ENCODE measurements at regions of chr6 and their contacts with region 1.

Region 1: DNA sequence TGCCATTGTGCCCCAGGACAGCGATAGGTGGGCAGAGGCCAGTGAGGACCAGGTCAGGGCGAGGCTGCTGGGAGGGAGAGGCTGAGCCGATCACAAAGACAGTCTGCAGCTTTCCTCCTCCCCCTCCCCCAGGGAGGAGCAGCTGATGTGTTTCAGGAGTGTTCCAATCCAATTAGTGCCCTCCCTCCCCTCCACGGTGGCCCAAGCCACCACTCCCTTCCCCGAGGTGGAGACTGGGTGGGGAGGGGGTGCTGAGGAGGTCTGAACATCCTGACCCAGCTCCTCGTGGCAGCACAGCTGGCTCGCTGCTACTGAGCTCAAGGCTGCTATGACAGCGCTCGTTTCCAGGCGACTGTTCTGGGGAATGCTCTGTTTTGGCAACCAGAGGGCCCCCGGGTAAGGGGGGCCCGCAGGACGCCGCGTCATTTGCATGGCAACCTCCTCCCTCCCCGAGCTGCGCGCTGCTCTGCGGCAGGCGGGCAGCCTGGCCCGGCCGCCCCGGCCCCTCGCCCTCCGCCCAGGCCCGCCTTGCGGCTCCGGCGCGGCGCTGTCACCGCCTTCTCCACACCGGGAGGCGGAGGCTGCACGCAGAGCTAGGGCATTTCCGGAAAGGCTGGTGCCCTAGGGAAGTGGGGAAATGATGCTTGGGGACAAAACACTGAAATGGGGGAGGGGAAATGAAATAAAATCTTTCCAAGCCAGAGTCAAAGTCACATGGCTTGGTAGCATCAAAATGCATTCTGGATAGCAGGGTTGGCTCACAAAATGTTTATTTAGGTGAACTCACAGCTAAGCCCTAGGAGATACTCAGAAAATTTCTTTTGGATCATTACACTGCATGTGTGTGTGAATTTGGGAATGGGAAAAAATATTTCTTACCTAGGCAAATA is 67.4 kb upstream of the PIM1 start:
- DNase-seq: peak; percentile 70
- ATAC-seq: peak; percentile 80
- H3K4me3 Mint-ChIP-seq: peak overlapping the region; percentile 78
- H3K27ac Mint-ChIP-seq: peak overlapping the region; percentile 82
- H3K4me1 Mint-ChIP-seq: peaks cover 38% of the 10 kb centered on the region
- H3K27me3 Mint-ChIP-seq: no peaks in the 10 kb centered on the region
- CTCF ChIP-seq: no peak

Region 2: DNA sequence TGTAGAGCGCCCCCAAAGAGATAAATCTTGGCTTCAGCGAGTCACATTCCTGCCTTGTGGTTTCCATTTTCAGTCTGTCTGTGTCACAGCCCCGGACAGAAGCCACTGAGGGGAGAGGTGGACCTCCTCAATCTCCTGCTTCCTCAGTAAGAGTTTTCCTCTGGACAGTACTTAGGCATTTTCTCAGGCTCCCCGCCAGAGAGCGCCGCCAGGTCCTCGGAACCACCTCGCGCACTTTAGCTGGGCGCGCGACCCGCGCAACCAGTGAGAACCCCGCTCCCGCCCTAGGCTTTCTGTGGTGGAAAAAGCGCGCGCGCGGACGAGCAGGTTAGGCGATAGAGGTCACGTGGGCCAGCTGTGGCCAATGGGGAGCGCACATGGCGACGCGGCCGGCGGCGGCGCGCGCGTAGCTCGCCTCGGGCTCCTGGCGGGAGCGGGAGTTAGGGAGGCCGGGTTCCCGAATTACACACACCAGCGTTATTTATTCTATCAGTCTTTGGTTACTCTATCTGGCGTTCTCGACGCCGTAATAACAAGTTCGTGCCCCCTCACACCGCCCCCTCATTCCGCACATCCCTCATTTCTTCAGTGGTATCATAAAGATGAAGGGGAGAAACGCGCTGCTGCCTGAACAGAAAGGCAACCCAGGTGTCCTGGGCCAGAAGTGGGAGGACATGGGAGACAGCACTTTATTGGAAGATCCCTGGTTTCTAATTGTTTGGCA is 679.3 kb before region 1 on chr6:
- CTCF ChIA-PET with region 1: no interaction called
- POLR2A ChIA-PET with region 1: no interaction called
- intact Hi-C with region 1: loop called (anchors 10 kb)
- DNase-seq: peak; percentile 91
- ATAC-seq: peak; percentile 95
- H3K4me3 Mint-ChIP-seq: peak overlapping the region; percentile 94
- H3K27ac Mint-ChIP-seq: peak overlapping the region; percentile 89
- H3K4me1 Mint-ChIP-seq: peaks cover 16% of the 10 kb centered on the region
- H3K27me3 Mint-ChIP-seq: no peaks in the 10 kb centered on the region
- CTCF ChIP-seq: no peak

Region 3: DNA sequence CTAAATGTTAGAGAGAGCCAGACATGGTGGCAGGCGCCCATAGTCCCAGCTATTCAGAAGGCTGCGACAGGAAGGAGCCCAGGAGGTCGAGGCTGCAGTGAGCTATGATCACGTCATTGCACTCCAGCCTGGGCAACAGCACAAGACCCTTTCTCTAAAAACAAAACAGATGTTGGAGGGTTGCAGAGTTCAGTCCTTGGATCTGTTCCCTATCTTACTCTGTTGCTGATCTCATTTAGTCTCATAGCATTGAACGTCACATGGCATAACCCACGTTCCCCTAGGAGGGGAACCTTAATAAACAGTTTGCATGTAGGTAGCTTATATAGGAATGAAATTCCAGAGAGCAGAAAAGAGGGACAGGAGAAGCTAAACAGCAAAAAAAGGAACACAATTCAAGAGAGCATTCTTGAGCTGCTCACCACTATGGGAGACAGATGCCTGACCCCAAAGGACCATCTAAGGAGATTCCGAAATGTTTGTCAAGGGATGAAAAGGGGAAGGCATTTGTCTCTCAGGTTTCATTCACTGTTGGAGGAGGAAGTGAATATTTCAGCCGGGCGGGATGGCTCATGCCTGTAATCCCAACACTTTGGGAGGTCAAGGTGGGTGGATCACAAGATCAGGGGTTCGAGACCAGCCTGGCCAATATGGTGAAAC is 12.8 kb after region 1 on chr6:
- CTCF ChIA-PET with region 1: no interaction called
- POLR2A ChIA-PET with region 1: interaction called, 10 read pairs
- intact Hi-C with region 1: no loop called
- DNase-seq: no peak
- ATAC-seq: no peak
- H3K4me3 Mint-ChIP-seq: no peak overlapping the region
- H3K27ac Mint-ChIP-seq: no peak overlapping the region
- H3K4me1 Mint-ChIP-seq: peaks cover 7% of the 10 kb centered on the region
- H3K27me3 Mint-ChIP-seq: peaks cover 2% of the 10 kb centered on the region
- CTCF ChIP-seq: no peak

Region 4: DNA sequence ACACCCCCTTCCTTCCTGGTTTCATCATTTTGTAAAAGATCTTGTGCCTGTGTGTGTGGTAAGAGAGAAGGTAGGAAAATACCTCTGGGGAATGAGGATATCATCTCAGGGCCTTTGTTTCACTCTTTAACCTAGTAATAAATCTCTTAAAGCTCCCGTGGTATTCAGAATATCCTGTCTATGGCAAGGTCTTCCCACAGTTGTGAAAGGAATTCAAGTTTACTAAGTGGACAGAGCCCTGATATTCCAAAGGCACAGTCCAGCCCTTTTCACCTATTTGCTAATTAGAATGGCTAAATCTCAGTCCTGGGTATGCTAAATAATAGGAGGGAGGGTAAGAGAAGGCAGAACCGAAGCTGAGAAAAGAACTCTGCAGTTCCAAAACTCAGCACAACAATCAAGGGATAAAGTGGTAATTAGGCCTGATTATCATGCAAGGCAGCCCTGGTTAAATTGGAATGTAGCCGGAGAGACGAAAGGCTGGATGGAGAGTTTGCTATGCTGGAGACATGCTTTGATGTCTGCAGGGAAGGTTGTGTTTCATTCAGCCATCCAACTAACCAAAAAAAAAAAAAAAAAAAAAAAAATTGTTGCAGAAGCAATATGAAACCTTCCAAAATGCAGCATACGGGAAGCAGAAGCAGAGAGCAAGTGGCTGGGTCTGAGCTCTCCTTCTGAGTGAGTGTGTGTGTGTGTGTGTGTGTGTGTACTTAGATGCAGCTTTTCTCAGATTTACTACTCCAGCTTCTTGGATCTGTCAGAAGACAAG is 38.9 kb after region 1 on chr6:
- CTCF ChIA-PET with region 1: no interaction called
- POLR2A ChIA-PET with region 1: interaction called, 12 read pairs
- intact Hi-C with region 1: loop called (anchors 5 kb)
- DNase-seq: no peak
- ATAC-seq: no peak
- H3K4me3 Mint-ChIP-seq: no peak overlapping the region
- H3K27ac Mint-ChIP-seq: peak overlapping the region; percentile 62
- H3K4me1 Mint-ChIP-seq: peaks cover 51% of the 10 kb centered on the region
- H3K27me3 Mint-ChIP-seq: no peaks in the 10 kb centered on the region
- CTCF ChIP-seq: no peak

Region 5: GRCh38 chr6:37155394-37156312 is 53.1 kb after region 1 on chr6:
- CTCF ChIA-PET with region 1: interaction called, 6 read pairs
- POLR2A ChIA-PET with region 1: interaction called, 13 read pairs
- intact Hi-C with region 1: loop called (anchors 1 kb)
- DNase-seq: peak; percentile 66
- ATAC-seq: peak; percentile 85
- H3K4me3 Mint-ChIP-seq: peak overlapping the region; percentile 59
- H3K27ac Mint-ChIP-seq: peak overlapping the region; percentile 97
- H3K4me1 Mint-ChIP-seq: peaks cover 65% of the 10 kb centered on the region
- H3K27me3 Mint-ChIP-seq: no peaks in the 10 kb centered on the region
- CTCF ChIP-seq: no peak

Region 6: GRCh38 chr6:37725957-37726356 is 623.4 kb after region 1 on chr6:
- CTCF ChIA-PET with region 1: no interaction called
- POLR2A ChIA-PET with region 1: no interaction called
- intact Hi-C with region 1: no loop called
- DNase-seq: no peak
- ATAC-seq: no peak
- H3K4me3 Mint-ChIP-seq: no peak overlapping the region
- H3K27ac Mint-ChIP-seq: no peak overlapping the region
- H3K4me1 Mint-ChIP-seq: no peaks in the 10 kb centered on the region
- H3K27me3 Mint-ChIP-seq: peaks cover 4% of the 10 kb centered on the region
- CTCF ChIP-seq: no peak

Measured in activated B cell treated with CpG ODN at 0.5 μM for 24 hours (primary cell).